CD8-positive, alpha-beta T cell (primary cell): ENCODE measurements at regions of chr5 and their contacts with region 1.

Region 1: GRCh38 chr5:158695595-158696330 is 404.0 kb downstream of the EBF1 start:
- DNase-seq: peak; percentile 21 to 83 (median 71)
- ATAC-seq: peak; percentile 78
- H3K4me3 ChIP-seq: no peak overlapping the region
- H3K4me3 Mint-ChIP-seq: no peak overlapping the region
- H3K27ac ChIP-seq: no peak overlapping the region
- H3K27ac Mint-ChIP-seq: no peak overlapping the region
- H3K4me1 ChIP-seq: no peaks in the 10 kb centered on the region
- H3K4me1 Mint-ChIP-seq: peaks cover 3% of the 10 kb centered on the region
- H3K27me3 ChIP-seq: peaks cover 0 to 2% of the 10 kb centered on the region in 2 experiments
- H3K27me3 Mint-ChIP-seq: peaks cover 3% of the 10 kb centered on the region
- CTCF ChIP-seq: peak; percentile 97

Region 2: GRCh38 chr5:158074992-158075769 is 620.6 kb before region 1 on chr5:
- CTCF ChIA-PET with region 1: interaction called, 7 read pairs
- POLR2A ChIA-PET with region 1: no interaction called
- intact Hi-C with region 1: loop called (anchors 10 kb)
- DNase-seq: peak; percentile 7 to 66 (median 39)
- ATAC-seq: peak; percentile 64
- H3K4me3 ChIP-seq: no peak overlapping the region
- H3K4me3 Mint-ChIP-seq: no peak overlapping the region
- H3K27ac ChIP-seq: no peak overlapping the region
- H3K27ac Mint-ChIP-seq: no peak overlapping the region
- H3K4me1 ChIP-seq: no peaks in the 10 kb centered on the region
- H3K4me1 Mint-ChIP-seq: peaks cover 3% of the 10 kb centered on the region
- H3K27me3 ChIP-seq: no peaks in the 10 kb centered on the region
- H3K27me3 Mint-ChIP-seq: peaks cover 7% of the 10 kb centered on the region
- CTCF ChIP-seq: peak; percentile 54

Region 3: DNA sequence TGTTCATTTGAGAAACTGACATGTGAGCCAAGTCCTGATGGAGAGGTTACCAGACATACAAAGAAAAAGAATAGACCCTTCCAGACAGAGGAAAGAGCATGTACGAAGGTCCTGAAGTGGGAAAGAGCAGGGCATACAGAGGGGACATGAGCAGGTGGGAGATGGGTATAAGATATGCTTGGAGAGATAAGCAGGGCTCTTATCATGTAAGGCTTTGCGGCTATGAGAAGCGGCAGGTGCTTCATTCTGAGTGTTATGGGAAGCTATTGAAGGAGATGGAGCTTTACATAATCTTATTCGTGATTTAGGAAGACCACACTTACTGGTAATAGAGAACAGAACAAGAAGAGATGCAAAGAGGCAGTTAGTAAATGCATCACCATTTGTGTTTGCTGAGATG is 13.1 kb before region 1 on chr5:
- CTCF ChIA-PET with region 1: interaction called, 11 read pairs
- POLR2A ChIA-PET with region 1: interaction called, 3 read pairs
- intact Hi-C with region 1: no loop called
- DNase-seq: no peak
- ATAC-seq: no peak
- H3K4me3 ChIP-seq: no peak overlapping the region
- H3K4me3 Mint-ChIP-seq: no peak overlapping the region
- H3K27ac ChIP-seq: no peak overlapping the region
- H3K27ac Mint-ChIP-seq: no peak overlapping the region
- H3K4me1 ChIP-seq: no peaks in the 10 kb centered on the region
- H3K4me1 Mint-ChIP-seq: no peaks in the 10 kb centered on the region
- H3K27me3 ChIP-seq: no peaks in the 10 kb centered on the region
- H3K27me3 Mint-ChIP-seq: peaks cover 9% of the 10 kb centered on the region
- CTCF ChIP-seq: no peak

Region 4: DNA sequence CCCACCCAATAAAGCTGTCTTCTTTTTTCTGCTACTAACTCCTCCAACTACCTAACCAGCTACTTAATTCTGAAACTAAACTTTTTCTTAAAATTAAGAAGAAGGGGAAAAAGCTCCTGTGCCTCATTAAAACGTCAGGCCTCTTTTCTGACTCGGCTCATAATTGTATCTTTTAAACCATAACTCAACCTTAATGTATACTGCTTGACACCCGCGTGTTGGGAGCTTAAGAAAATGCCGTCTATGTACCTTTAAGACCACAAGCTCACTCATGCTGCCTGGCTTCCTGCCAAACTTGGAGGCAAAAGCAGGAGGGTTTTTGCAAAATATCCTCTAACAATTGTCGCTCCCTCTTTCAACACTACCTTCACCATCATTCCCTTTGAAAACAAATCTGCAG is 399.0 kb after region 1 on chr5:
- CTCF ChIA-PET with region 1: interaction called, 305 read pairs
- POLR2A ChIA-PET with region 1: no interaction called
- intact Hi-C with region 1: no loop called
- DNase-seq: peak in 8 of 9 experiments; percentile 32 to 80 (median 62)
- ATAC-seq: no peak
- H3K4me3 ChIP-seq: no peak overlapping the region
- H3K4me3 Mint-ChIP-seq: peak overlapping the region; percentile 20
- H3K27ac ChIP-seq: no peak overlapping the region
- H3K27ac Mint-ChIP-seq: no peak overlapping the region
- H3K4me1 ChIP-seq: peaks cover 30% of the 10 kb centered on the region
- H3K4me1 Mint-ChIP-seq: peaks cover 28% of the 10 kb centered on the region
- H3K27me3 ChIP-seq: peaks cover 15 to 27% of the 10 kb centered on the region in 2 experiments
- H3K27me3 Mint-ChIP-seq: peaks cover 43% of the 10 kb centered on the region
- CTCF ChIP-seq: no peak

Region 5: GRCh38 chr5:159133041-159133741 is 437.4 kb after region 1 on chr5:
- CTCF ChIA-PET with region 1: interaction called, 117 read pairs
- POLR2A ChIA-PET with region 1: interaction called, 5 read pairs
- intact Hi-C with region 1: loop called (anchors 1 kb)
- DNase-seq: peak in 2 of 9 experiments; percentile 52 to 61
- ATAC-seq: peak; percentile 40
- H3K4me3 ChIP-seq: no peak overlapping the region
- H3K4me3 Mint-ChIP-seq: no peak overlapping the region
- H3K27ac ChIP-seq: no peak overlapping the region
- H3K27ac Mint-ChIP-seq: no peak overlapping the region
- H3K4me1 ChIP-seq: no peaks in the 10 kb centered on the region
- H3K4me1 Mint-ChIP-seq: no peaks in the 10 kb centered on the region
- H3K27me3 ChIP-seq: no peaks in the 10 kb centered on the region
- H3K27me3 Mint-ChIP-seq: peaks cover 9% of the 10 kb centered on the region
- CTCF ChIP-seq: peak; percentile 88